ENCODE measurements at regions of chr22 and their contacts with region 1.

Region 1: DNA sequence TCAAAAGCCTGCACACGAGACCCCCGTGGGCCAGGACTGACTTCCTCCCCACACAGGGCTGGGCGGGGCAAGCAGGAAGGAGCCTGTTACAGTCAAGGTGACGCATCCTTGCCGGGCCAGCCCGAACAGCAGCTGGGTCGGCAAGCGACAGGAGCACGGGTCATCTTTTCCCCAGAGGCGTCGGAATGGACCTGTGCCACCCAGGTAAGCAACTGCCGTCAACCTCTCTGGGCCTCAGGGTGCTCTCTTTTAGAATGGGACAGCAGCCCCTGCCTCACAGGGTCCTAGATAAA is at the start of gene CYTH4:
- DNase-seq: peak; percentile 52 to 87 (median 65)
- H3K4me3 ChIP-seq: peak within 1 kb of the TSS; percentile 98 to 99
- H3K4me3 Mint-ChIP-seq: peak within 1 kb of the TSS; percentile 89 to 100 (median 94)
- H3K27ac ChIP-seq: peak within 1 kb of the TSS; percentile 81
- H3K27ac Mint-ChIP-seq: peak within 1 kb of the TSS; percentile 83 to 99 (median 96)
- H3K4me1 ChIP-seq: peaks cover 46% of the 10 kb centered on the region
- H3K4me1 Mint-ChIP-seq: peaks cover 33 to 56% (median 44%) of the 10 kb centered on the region in 4 donors
- H3K27me3 ChIP-seq: no peaks in the 10 kb centered on the region
- H3K27me3 Mint-ChIP-seq: no peaks in the 10 kb centered on the region
- total RNA-seq, gene CYTH4: 169 to 177 TPM

Region 2: GRCh38 chr22:37212167-37212906 is 70.0 kb before region 1 on chr22 and contains the start of gene SSTR3:
- CTCF ChIA-PET with region 1: no interaction called
- POLR2A ChIA-PET with region 1: no interaction called
- intact Hi-C with region 1: no loop called
- DNase-seq: no peak
- H3K4me3 ChIP-seq: no peak within 1 kb of the TSS
- H3K4me3 Mint-ChIP-seq: no peak within 1 kb of the TSS
- H3K27ac ChIP-seq: no peak within 1 kb of the TSS
- H3K27ac Mint-ChIP-seq: peak within 1 kb of the TSS in 2 of 7 donors; percentile 31 to 72
- H3K4me1 ChIP-seq: peaks cover 21% of the 10 kb centered on the region
- H3K4me1 Mint-ChIP-seq: peaks cover 11 to 29% (median 15%) of the 10 kb centered on the region in 4 donors
- H3K27me3 ChIP-seq: no peaks in the 10 kb centered on the region
- H3K27me3 Mint-ChIP-seq: no peaks in the 10 kb centered on the region
- total RNA-seq, gene SSTR3: 8.2 to 9.3 TPM

Region 3: GRCh38 chr22:37229805-37230672 is 52.3 kb before region 1 on chr22:
- CTCF ChIA-PET with region 1: no interaction called
- POLR2A ChIA-PET with region 1: interaction called, 11 read pairs
- intact Hi-C with region 1: no loop called
- DNase-seq: peak; percentile 87 to 97 (median 88)
- H3K4me3 ChIP-seq: peak overlapping the region; percentile 48 to 51
- H3K4me3 Mint-ChIP-seq: peak overlapping the region; percentile 75 to 88 (median 82)
- H3K27ac ChIP-seq: peak overlapping the region; percentile 97
- H3K27ac Mint-ChIP-seq: peak overlapping the region; percentile 87 to 100 (median 100)
- H3K4me1 ChIP-seq: peaks cover 96% of the 10 kb centered on the region
- H3K4me1 Mint-ChIP-seq: peaks cover 67 to 92% (median 83%) of the 10 kb centered on the region in 4 donors
- H3K27me3 ChIP-seq: no peaks in the 10 kb centered on the region
- H3K27me3 Mint-ChIP-seq: no peaks in the 10 kb centered on the region

Region 4: GRCh38 chr22:37300551-37301017 is 18.3 kb after region 1 on chr22:
- CTCF ChIA-PET with region 1: interaction called, 4 read pairs
- POLR2A ChIA-PET with region 1: interaction called, 32 read pairs
- intact Hi-C with region 1: no loop called
- DNase-seq: peak; percentile 43 to 66 (median 48)
- H3K4me3 ChIP-seq: peak overlapping the region in 1 of 2 donors; percentile 21
- H3K4me3 Mint-ChIP-seq: peak overlapping the region; percentile 9 to 85 (median 80)
- H3K27ac ChIP-seq: peak overlapping the region; percentile 72
- H3K27ac Mint-ChIP-seq: peak overlapping the region; percentile 92 to 97 (median 96)
- H3K4me1 ChIP-seq: peaks cover 92% of the 10 kb centered on the region
- H3K4me1 Mint-ChIP-seq: peaks cover 47 to 82% (median 64%) of the 10 kb centered on the region in 4 donors
- H3K27me3 ChIP-seq: no peaks in the 10 kb centered on the region
- H3K27me3 Mint-ChIP-seq: no peaks in the 10 kb centered on the region

Region 5: DNA sequence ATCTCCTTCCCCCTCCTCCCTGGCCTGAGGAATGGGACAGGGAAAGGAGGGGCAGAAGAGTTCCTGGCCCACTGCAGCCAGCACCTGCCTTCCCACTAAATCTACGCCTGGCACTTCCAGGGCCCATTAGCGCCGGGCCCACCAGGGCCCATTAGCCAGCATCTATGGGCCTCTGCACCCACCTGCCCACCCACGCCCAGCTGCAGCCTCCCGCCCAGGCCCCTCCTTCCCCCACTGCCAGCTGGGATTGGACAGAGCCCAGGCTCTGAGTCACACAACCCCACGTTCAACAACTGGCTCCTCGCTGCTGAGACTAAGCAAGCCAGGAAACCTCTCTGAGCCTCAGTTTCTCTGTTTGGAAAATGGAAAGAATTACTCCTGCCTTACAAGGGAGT is 48.7 kb after region 1 on chr22:
- CTCF ChIA-PET with region 1: no interaction called
- POLR2A ChIA-PET with region 1: no interaction called
- intact Hi-C with region 1: no loop called
- DNase-seq: no peak
- H3K4me3 ChIP-seq: no peak overlapping the region
- H3K4me3 Mint-ChIP-seq: no peak overlapping the region
- H3K27ac ChIP-seq: no peak overlapping the region
- H3K27ac Mint-ChIP-seq: no peak overlapping the region
- H3K4me1 ChIP-seq: peaks cover 11% of the 10 kb centered on the region
- H3K4me1 Mint-ChIP-seq: peaks cover 3 to 16% (median 5%) of the 10 kb centered on the region in 4 donors
- H3K27me3 ChIP-seq: peaks cover 18% of the 10 kb centered on the region
- H3K27me3 Mint-ChIP-seq: peaks cover 37 to 49% of the 10 kb centered on the region in 2 donors